B cell (primary cell): ENCODE measurements at regions of chr9 and their contacts with region 1.

Region 1: DNA sequence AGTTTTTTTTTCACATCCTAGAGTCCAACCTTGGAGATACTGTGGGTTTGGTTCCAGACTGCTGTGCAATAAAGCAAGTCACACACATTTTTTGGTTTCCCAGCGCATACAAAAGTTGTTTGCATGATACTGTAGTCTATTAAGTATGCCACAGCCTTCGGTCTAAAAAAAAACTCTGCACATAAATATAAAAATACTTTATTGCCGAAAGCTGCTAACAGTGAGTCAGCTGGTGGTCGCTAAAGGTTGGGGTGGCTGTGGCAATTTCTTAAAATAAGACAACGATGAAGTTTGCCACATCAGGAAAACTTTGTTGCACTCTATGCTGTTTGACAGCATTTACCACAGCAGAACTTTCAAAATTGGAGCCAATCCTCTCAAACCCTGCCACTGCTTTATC is 37.4 kb downstream of the UBQLN1 start:
- DNase-seq: no peak
- ATAC-seq: no peak
- H3K4me3 ChIP-seq: no peak overlapping the region
- H3K4me3 Mint-ChIP-seq: no peak overlapping the region
- H3K27ac ChIP-seq: no peak overlapping the region
- H3K27ac Mint-ChIP-seq: no peak overlapping the region
- H3K4me1 ChIP-seq: peaks cover 9 to 10% of the 10 kb centered on the region in 2 donors
- H3K4me1 Mint-ChIP-seq: peaks cover 18% of the 10 kb centered on the region
- H3K27me3 ChIP-seq: no peaks in the 10 kb centered on the region
- H3K27me3 Mint-ChIP-seq: no peaks in the 10 kb centered on the region
- CTCF ChIP-seq: no peak

Region 2: GRCh38 chr9:83688921-83689320 is 18.5 kb after region 1 on chr9:
- CTCF ChIA-PET with region 1: no interaction called
- POLR2A ChIA-PET with region 1: no interaction called
- intact Hi-C with region 1: no loop called
- DNase-seq: no peak
- ATAC-seq: no peak
- H3K4me3 ChIP-seq: no peak overlapping the region
- H3K4me3 Mint-ChIP-seq: no peak overlapping the region
- H3K27ac ChIP-seq: no peak overlapping the region
- H3K27ac Mint-ChIP-seq: no peak overlapping the region
- H3K4me1 ChIP-seq: peaks cover 8 to 26% of the 10 kb centered on the region in 2 donors
- H3K4me1 Mint-ChIP-seq: peaks cover 67% of the 10 kb centered on the region
- H3K27me3 ChIP-seq: no peaks in the 10 kb centered on the region
- H3K27me3 Mint-ChIP-seq: no peaks in the 10 kb centered on the region
- CTCF ChIP-seq: no peak

Region 3: GRCh38 chr9:83707768-83708514 is 37.6 kb after region 1 on chr9 and contains the start of gene UBQLN1:
- CTCF ChIA-PET with region 1: no interaction called
- POLR2A ChIA-PET with region 1: no interaction called
- intact Hi-C with region 1: loop called (anchors 5 kb)
- DNase-seq: peak; percentile 97
- ATAC-seq: peak; percentile 83
- H3K4me3 ChIP-seq: peak within 1 kb of the TSS; percentile 75 to 95 (median 87)
- H3K4me3 Mint-ChIP-seq: peak within 1 kb of the TSS; percentile 93
- H3K27ac ChIP-seq: peak within 1 kb of the TSS; percentile 95 to 96
- H3K27ac Mint-ChIP-seq: peak within 1 kb of the TSS; percentile 95
- H3K4me1 ChIP-seq: peaks cover 20% of the 10 kb centered on the region in 2 donors
- H3K4me1 Mint-ChIP-seq: peaks cover 46% of the 10 kb centered on the region
- H3K27me3 ChIP-seq: no peaks in the 10 kb centered on the region
- H3K27me3 Mint-ChIP-seq: no peaks in the 10 kb centered on the region
- CTCF ChIP-seq: no peak
- total RNA-seq, gene UBQLN1: 101 and 108 TPM in 2 replicates